Spleen (tissue), 13 donors: ENCODE measurements at regions of chr16 and their contacts with region 1.

Region 1: GRCh38 chr16:46908540-46909372 is 24.6 kb downstream of the GPT2 start:
- DNase-seq: no peak
- H3K4me3 ChIP-seq: no peak overlapping the region
- H3K27ac ChIP-seq: no peak overlapping the region
- H3K4me1 ChIP-seq: peaks cover 0 to 54% (median 10%) of the 10 kb centered on the region in 6 donors
- H3K27me3 ChIP-seq: no peaks in the 10 kb centered on the region
- CTCF ChIP-seq: peak; percentile 36 to 87 (median 58)
- POLR2A ChIP-seq: no peak

Region 2: DNA sequence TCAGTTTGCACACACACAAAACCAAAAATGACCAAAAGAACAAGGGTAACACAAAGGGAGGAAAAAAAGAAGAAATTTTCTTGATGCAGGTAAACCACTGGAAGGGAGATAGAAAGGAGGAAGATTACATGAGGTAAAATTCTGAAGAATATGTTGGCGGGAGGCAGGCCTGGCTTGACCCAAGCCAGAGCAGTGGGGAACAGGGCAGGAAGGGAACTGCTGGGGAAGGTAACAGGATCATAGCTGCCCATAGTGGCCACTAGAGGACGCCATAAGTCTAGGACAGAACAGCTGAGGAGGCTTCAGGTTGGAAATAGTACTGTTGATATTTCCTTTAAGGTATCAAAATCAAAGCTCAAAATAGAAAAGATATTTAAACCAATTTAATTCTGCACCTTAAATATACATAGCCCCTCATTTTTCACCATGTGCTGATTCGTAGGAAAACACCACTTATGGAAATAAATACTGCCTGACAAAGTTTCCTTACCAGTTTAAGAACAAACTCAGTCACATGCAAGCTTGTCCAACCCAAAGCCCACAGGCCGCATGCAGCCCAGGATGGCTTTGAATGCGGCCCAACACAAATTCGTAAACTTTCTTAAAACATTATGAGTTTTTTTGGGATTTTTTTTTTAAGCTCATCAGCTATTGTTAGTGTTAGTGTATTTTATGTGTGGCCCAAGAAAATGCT is 235.3 kb before region 1 on chr16:
- intact Hi-C with region 1: loop called (anchors 10 kb)
- DNase-seq: no peak
- H3K4me3 ChIP-seq: no peak overlapping the region
- H3K27ac ChIP-seq: no peak overlapping the region
- H3K4me1 ChIP-seq: no peaks in the 10 kb centered on the region
- H3K27me3 ChIP-seq: no peaks in the 10 kb centered on the region
- CTCF ChIP-seq: peak; percentile 44 to 84 (median 75)
- POLR2A ChIP-seq: no peak

Region 3: DNA sequence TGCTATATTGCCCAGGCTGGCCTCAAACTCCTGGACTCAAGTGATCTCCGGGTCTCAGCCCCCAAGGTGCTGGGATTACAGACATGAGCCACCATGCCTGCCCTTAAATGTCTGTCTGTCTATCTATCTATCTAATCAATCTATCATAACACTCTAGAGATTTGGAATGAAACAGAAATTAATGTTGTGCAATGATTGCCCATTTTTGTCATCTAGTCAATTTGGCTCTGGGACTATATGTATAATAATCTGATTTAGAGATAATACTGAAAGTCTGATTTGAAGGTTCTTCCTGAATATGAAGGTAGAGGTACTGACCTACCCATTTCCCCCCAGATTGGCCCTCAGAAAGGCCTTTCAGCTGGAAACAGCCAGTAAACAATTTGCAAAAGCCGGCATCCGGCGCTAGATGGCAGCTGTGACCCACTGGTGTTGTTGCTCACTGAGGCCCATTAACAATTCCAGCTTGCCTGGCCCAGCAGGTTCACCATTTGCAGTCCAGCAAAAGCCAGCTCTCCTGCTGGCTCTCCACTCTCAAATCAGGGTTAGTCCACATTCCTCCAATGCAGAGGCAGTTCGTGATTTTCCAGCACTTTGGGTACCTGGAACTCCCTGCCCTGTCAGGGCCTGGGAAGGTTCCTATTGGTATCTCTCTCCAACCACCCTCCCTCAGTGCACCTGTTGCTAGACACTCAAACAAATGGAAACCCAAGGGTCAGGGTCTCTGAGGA is 54.9 kb before region 1 on chr16:
- intact Hi-C with region 1: loop called (anchors 5 kb)
- DNase-seq: peak; percentile 89
- H3K4me3 ChIP-seq: no peak overlapping the region
- H3K27ac ChIP-seq: no peak overlapping the region
- H3K4me1 ChIP-seq: peaks cover 0 to 7% (median 0%) of the 10 kb centered on the region in 6 donors
- H3K27me3 ChIP-seq: no peaks in the 10 kb centered on the region
- CTCF ChIP-seq: peak; percentile 26 to 78 (median 66)
- POLR2A ChIP-seq: no peak

Region 4: DNA sequence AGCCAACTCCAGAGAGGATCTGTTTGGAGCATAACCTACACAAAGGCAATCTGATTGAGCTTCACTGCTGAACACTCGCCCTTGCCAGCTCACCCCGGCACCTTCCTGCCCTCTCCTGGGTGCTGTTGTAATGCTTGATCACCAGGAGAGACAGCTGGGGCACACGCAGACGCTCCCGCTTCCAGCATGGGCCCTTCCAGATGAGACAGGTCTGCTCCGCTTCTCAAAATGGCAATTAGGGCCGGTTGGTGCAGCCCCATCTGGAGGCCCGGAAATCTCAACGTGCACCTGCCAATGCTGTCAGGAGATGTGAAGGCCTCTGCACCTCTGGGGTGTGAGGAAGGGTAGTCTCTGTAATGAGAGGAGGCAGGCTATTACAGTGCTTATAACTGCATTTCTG is 1041.0 kb after region 1 on chr16:
- intact Hi-C with region 1: no loop called
- DNase-seq: no peak
- H3K4me3 ChIP-seq: no peak overlapping the region
- H3K27ac ChIP-seq: no peak overlapping the region
- H3K4me1 ChIP-seq: peaks cover 0 to 5% (median 0%) of the 10 kb centered on the region in 6 donors
- H3K27me3 ChIP-seq: no peaks in the 10 kb centered on the region
- CTCF ChIP-seq: no peak
- POLR2A ChIP-seq: no peak